ENCODE measurements at regions of chr1 and their contacts with region 1.

Region 1: DNA sequence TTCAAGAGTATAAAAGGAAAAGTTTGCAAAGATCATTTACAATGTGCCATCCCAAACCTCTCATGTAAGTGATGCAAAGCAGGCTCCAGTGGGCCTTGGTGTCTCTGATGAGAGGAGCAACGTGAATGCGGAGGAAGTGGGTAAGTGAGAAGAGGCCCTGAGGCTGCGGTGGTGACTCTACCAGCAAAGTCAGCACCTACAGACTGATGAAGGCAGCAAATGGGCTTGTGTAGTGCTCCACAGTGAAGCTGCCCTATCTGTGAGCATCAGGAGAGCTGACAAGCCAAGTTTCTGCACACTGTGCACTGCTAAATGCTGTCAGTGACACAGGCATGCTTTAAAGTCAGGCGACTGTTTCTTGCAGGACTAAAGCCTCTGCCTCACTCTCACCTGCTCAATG is 15.6 kb upstream of the RAP1A start:
- DNase-seq: no peak
- H3K27ac ChIP-seq: no peak overlapping the region
- CTCF ChIP-seq: no peak

Region 2: GRCh38 chr1:111520053-111520452 is 83.9 kb before region 1 on chr1:
- CTCF ChIA-PET with region 1: interaction called, 10 read pairs
- POLR2A ChIA-PET with region 1: no interaction called
- DNase-seq: no peak
- H3K27ac ChIP-seq: no peak overlapping the region
- CTCF ChIP-seq: no peak

Region 3: DNA sequence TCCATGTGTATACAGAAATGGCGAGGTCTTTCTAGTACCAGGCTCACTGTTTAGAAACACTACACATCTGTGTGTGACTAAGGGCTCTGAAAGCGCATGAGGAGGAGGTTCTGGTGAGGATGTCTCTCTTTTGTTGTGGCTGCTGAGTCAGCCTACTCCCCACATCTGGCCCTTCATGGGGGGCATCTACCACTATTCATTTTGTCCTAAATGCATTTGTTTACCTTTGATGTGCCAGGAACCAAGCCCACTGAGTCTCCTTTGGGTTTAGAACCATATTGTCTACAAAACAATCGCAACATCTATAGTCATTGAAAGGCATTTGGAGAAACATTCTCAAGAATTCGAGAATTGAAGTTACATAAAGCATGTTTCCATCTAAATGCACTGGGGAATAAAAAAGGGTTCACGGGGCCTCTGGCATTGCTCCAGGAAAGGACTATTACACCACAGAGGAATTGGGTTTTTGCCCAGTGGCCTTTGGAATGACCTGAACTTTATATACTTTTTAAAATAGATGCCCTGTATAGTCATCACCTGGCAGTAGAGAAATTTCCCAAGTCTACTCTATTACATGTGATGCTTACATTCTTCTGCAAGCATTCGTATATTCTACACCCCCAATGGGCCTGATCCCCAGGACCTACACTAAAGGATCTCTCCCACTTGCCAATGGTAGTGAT is 65.5 kb before region 1 on chr1:
- CTCF ChIA-PET with region 1: no interaction called
- POLR2A ChIA-PET with region 1: no interaction called
- DNase-seq: no peak
- H3K27ac ChIP-seq: no peak overlapping the region
- CTCF ChIP-seq: no peak

Measured in RWPE1 (cell line).